ENCODE measurements at regions of chr7 and their contacts with region 1.

Region 1: GRCh38 chr7:27242555-27243339 is at the start of gene EVX1:
- DNase-seq: peak; percentile 77
- ATAC-seq: peak; percentile 56
- H3K4me3 Mint-ChIP-seq: peak within 1 kb of the TSS; percentile 33
- H3K27ac Mint-ChIP-seq: no peak within 1 kb of the TSS
- H3K4me1 Mint-ChIP-seq: peaks cover 18% of the 10 kb centered on the region
- H3K27me3 Mint-ChIP-seq: peaks cover 74% of the 10 kb centered on the region
- total RNA-seq, gene EVX1: not detected

Region 2: GRCh38 chr7:27150568-27151340 is 92.0 kb before region 1 on chr7:
- CTCF ChIA-PET with region 1: interaction called, 13 read pairs
- POLR2A ChIA-PET with region 1: interaction called, 3 read pairs
- intact Hi-C with region 1: no loop called
- DNase-seq: peak; percentile 82
- ATAC-seq: peak; percentile 83
- H3K4me3 Mint-ChIP-seq: peak overlapping the region; percentile 35
- H3K27ac Mint-ChIP-seq: no peak overlapping the region
- H3K4me1 Mint-ChIP-seq: peaks cover 36% of the 10 kb centered on the region
- H3K27me3 Mint-ChIP-seq: peaks cover 83% of the 10 kb centered on the region

Region 3: GRCh38 chr7:27172823-27173510 is 69.8 kb before region 1 on chr7:
- CTCF ChIA-PET with region 1: interaction called, 4 read pairs
- POLR2A ChIA-PET with region 1: no interaction called
- intact Hi-C with region 1: loop called in 1 of 2 experiments (anchors 1 kb)
- DNase-seq: peak; percentile 31
- ATAC-seq: peak; percentile 14
- H3K4me3 Mint-ChIP-seq: no peak overlapping the region
- H3K27ac Mint-ChIP-seq: no peak overlapping the region
- H3K4me1 Mint-ChIP-seq: peaks cover 15% of the 10 kb centered on the region
- H3K27me3 Mint-ChIP-seq: peaks cover 56% of the 10 kb centered on the region

Region 4: DNA sequence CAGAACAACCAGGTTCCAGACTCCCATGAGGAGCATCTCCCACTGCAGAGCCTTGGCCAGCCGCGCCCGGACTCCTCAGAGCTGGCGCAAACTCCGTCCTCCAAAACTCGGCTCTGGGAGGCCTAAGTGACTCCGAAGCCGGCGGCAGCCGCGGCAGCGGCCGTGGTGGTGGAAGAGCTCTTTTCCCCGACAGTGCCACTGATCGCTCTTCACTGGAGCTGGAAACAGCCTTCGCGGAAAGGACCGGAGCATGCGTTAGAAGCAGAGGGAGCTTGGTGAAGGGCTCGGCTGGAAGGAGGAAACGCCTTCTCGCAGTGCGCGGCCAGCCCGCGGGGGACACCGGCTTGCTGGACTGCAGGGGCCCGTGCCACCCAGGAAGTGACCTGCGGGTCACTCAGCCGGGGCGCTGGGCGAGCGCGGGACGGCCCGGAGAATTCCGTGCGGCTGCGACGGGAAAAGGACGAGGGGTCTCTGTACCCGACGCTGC is 37.9 kb before region 1 on chr7:
- CTCF ChIA-PET with region 1: interaction called, 3 read pairs
- POLR2A ChIA-PET with region 1: no interaction called
- intact Hi-C with region 1: loop called in 1 of 2 experiments (anchors 2 kb)
- DNase-seq: no peak
- ATAC-seq: no peak
- H3K4me3 Mint-ChIP-seq: no peak overlapping the region
- H3K27ac Mint-ChIP-seq: no peak overlapping the region
- H3K4me1 Mint-ChIP-seq: peaks cover 27% of the 10 kb centered on the region
- H3K27me3 Mint-ChIP-seq: peaks cover 79% of the 10 kb centered on the region